ENCODE measurements at regions of chr7 and their contacts with region 1.

Region 1: GRCh38 chr7:99975782-99976521 is at the start of gene AZGP1:
- DNase-seq: no peak
- H3K4me3 ChIP-seq: no peak within 1 kb of the TSS
- H3K27ac ChIP-seq: no peak within 1 kb of the TSS
- H3K4me1 ChIP-seq: no peaks in the 10 kb centered on the region; a peak in 1 of 4 replicates
- H3K27me3 ChIP-seq: peaks cover 24% of the 10 kb centered on the region; the same call in 1 of the 2 replicates
- CTCF ChIP-seq: no peak
- EP300 ChIP-seq: no peak
- RAD21 ChIP-seq: no peak
- polyA plus RNA-seq, gene AZGP1: 0.15 TPM in 1 of 2 replicates, not detected in the other

Region 2: DNA sequence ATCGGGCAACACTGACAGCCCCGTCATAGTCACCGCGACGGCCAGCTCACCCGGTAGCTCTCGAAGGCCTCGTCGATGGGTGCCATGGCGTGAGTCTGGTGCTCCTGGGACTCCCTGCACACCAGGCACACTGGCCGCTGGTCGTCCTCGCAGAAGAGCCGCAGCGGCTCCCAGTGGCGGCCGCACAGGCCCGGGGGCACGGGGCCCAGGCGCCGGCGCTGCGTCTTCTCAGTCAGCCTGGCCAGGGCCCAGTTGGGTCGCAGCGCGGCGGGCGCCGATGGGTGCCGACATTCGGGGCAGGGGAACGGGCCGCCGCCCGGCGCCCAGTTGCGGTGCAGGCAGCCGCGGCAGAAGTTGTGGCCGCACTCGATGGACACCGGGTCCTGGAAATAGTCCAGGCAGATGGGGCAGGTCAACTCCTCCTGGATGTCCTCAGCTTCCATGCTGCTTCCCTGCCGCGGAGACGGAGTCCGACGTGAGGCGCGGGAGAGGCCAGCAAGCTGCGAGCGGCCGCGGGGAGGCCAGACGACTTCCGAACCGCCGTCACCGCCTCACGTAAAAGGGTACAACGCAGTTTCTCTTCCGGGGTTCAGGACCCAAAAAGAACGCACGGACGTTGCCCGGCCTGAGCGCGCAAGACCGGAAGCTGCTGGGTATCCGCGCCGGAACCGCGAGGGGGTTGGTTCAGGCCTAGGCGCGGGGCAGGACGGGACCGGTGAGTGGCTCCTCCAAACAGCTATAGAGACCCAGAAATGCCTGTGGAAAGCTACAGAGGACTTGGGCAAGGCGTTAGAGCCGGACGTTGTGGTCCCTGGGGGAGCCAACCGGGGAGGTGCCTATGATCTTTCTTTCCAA is 56.8 kb before region 1 on chr7 and contains the start of gene TRIM4:
- CTCF ChIA-PET with region 1: interaction called, 18 read pairs
- POLR2A ChIA-PET with region 1: no interaction called
- DNase-seq: peak; percentile 87
- H3K4me3 ChIP-seq: peak within 1 kb of the TSS; percentile 59 to 64
- H3K27ac ChIP-seq: peak within 1 kb of the TSS; percentile 62 to 64
- H3K4me1 ChIP-seq: no peaks in the 10 kb centered on the region; a peak in 1 of 4 replicates
- H3K27me3 ChIP-seq: peaks cover 19% of the 10 kb centered on the region; the same call in 1 of the 2 replicates
- CTCF ChIP-seq: peak; percentile 20; the same call in 1 of the 2 replicates
- EP300 ChIP-seq: no peak
- RAD21 ChIP-seq: no peak
- polyA plus RNA-seq, gene TRIM4: 6.6 and 7.6 TPM in 2 replicates

Region 3: GRCh38 chr7:100049441-100050311 is 73.7 kb after region 1 on chr7 and contains the start of gene ZSCAN21:
- CTCF ChIA-PET with region 1: interaction called, 15 read pairs
- POLR2A ChIA-PET with region 1: no interaction called
- DNase-seq: peak; percentile 96
- H3K4me3 ChIP-seq: peak within 1 kb of the TSS; percentile 70 to 86
- H3K27ac ChIP-seq: peak within 1 kb of the TSS; percentile 93 to 94
- H3K4me1 ChIP-seq: peaks cover 5 to 9% of the 10 kb centered on the region in 2 experiments; a peak in 2 of 4 replicates
- H3K27me3 ChIP-seq: no peaks in the 10 kb centered on the region
- CTCF ChIP-seq: peak; percentile 47
- EP300 ChIP-seq: 0 out of 4 replicates have a peak, but pooled peaks of 1 of the 2 experiments have one; percentile 20
- RAD21 ChIP-seq: peak; percentile 31; the same call in 1 of the 2 replicates
- polyA plus RNA-seq, gene ZSCAN21: 17.5 and 22.8 TPM in 2 replicates

Region 4: GRCh38 chr7:100126931-100127865 is 151.2 kb after region 1 on chr7 and contains the start of gene MBLAC1:
- CTCF ChIA-PET with region 1: interaction called, 30 read pairs
- POLR2A ChIA-PET with region 1: no interaction called
- DNase-seq: peak; percentile 99
- H3K4me3 ChIP-seq: peak within 1 kb of the TSS; percentile 65 to 84
- H3K27ac ChIP-seq: peak within 1 kb of the TSS; percentile 96 to 97
- H3K4me1 ChIP-seq: peaks cover 6 to 20% of the 10 kb centered on the region in 2 experiments; a peak in 2 of 4 replicates
- H3K27me3 ChIP-seq: no peaks in the 10 kb centered on the region
- CTCF ChIP-seq: no peak
- EP300 ChIP-seq: peak in 1 of 2 experiments; percentile 51; a peak in 1 of 4 replicates
- RAD21 ChIP-seq: no peak
- polyA plus RNA-seq, gene MBLAC1: 2.5 and 4.4 TPM in 2 replicates